ENCODE measurements at regions of chr6 and their contacts with region 1.

Region 1: DNA sequence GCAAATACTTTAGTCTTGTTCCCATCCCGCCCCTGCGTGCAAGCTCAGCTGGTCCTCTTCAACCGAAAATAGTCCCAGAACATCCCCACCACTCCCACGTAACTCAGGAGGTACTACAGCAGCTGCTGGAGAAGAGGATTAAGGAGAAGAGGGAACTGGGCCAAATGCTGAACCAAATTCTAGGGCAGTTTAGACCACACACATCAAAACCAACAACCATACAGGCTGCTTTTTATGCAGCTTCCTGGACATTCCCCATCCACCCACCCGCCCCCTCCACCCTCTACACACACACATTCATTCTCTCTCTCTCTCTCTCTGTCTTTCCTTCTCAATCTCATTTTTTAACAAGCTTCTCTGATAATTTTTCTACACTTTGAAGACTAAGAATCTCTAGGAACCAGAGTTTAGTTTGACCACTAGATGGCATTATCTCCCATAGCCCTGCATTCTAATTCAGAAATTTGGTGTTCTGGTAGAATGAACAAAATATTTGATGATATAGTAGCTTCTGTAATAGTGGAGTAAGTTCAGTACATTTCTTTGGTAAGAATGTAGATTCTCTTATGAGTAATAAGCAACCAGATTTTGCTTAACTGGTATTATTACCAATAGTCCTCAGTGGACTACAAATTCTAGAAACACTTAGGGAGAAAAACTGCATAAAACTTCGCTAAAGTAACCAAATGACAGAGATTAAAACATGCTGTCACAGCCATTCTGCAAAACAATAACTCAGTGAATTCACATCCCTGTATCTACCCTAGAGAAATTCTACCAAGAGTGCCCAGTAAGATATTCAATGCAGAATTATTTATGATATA is 52.1 kb upstream of the BEND6 start:
- DNase-seq: peak; percentile 46
- H3K4me3 Mint-ChIP-seq: no peak overlapping the region
- H3K27ac Mint-ChIP-seq: no peak overlapping the region
- H3K4me1 Mint-ChIP-seq: peaks cover 16% of the 10 kb centered on the region
- H3K27me3 Mint-ChIP-seq: no peaks in the 10 kb centered on the region
- CTCF ChIP-seq: peak; percentile 58

Region 2: GRCh38 chr6:56517155-56517745 is 385.6 kb before region 1 on chr6:
- CTCF ChIA-PET with region 1: no interaction called
- POLR2A ChIA-PET with region 1: no interaction called
- intact Hi-C with region 1: no loop called
- DNase-seq: no peak
- H3K4me3 Mint-ChIP-seq: no peak overlapping the region
- H3K27ac Mint-ChIP-seq: no peak overlapping the region
- H3K4me1 Mint-ChIP-seq: peaks cover 6% of the 10 kb centered on the region
- H3K27me3 Mint-ChIP-seq: no peaks in the 10 kb centered on the region
- CTCF ChIP-seq: no peak

Region 3: GRCh38 chr6:56862415-56863175 is 40.3 kb before region 1 on chr6:
- CTCF ChIA-PET with region 1: interaction called, 11 read pairs
- POLR2A ChIA-PET with region 1: no interaction called
- intact Hi-C with region 1: no loop called
- DNase-seq: no peak
- H3K4me3 Mint-ChIP-seq: peak overlapping the region; percentile 3
- H3K27ac Mint-ChIP-seq: peak overlapping the region; percentile 77
- H3K4me1 Mint-ChIP-seq: peaks cover 36% of the 10 kb centered on the region
- H3K27me3 Mint-ChIP-seq: no peaks in the 10 kb centered on the region
- CTCF ChIP-seq: no peak

Region 4: DNA sequence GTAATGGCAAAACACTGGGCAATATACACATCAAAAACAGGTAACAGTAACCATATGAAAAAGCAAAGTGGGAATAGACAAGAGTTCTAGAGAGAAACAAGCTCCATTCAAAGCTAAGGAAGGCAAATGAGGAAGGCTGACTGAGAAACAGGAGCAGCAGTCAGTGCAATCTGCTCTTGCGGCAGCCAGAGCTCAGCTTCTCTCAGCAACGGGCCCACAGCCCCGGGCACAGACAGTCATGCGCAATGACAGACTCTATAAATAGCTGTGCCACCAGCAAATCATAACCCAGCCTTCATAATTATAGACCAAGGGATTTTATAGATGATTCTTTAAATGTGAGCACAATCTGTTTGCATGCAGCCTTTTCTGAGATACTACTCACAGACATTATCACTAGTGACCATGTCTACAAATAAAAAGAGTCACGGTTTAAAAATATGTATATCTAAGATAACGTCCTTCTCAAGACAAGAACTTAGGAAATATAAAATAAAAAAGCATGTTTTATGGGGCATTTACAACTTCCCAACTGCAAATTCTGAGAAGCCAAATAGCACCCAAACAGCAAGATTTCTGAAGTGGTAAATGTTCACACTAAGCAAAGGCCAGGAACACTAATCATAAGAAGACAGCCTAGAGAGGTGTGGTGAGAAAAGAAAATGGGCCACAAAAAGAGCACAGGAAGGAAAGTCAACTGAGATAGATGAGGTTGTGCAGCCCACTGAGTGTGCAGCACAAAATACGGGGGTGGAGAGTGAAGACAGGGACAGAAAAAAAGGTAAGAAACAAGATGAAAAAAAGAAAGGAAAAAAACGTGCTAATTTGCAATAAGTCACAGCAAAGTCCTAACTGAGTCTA is 12.2 kb after region 1 on chr6:
- CTCF ChIA-PET with region 1: interaction called, 29 read pairs
- POLR2A ChIA-PET with region 1: no interaction called
- intact Hi-C with region 1: no loop called
- DNase-seq: no peak
- H3K4me3 Mint-ChIP-seq: no peak overlapping the region
- H3K27ac Mint-ChIP-seq: no peak overlapping the region
- H3K4me1 Mint-ChIP-seq: peaks cover 6% of the 10 kb centered on the region
- H3K27me3 Mint-ChIP-seq: no peaks in the 10 kb centered on the region
- CTCF ChIP-seq: no peak

Region 5: DNA sequence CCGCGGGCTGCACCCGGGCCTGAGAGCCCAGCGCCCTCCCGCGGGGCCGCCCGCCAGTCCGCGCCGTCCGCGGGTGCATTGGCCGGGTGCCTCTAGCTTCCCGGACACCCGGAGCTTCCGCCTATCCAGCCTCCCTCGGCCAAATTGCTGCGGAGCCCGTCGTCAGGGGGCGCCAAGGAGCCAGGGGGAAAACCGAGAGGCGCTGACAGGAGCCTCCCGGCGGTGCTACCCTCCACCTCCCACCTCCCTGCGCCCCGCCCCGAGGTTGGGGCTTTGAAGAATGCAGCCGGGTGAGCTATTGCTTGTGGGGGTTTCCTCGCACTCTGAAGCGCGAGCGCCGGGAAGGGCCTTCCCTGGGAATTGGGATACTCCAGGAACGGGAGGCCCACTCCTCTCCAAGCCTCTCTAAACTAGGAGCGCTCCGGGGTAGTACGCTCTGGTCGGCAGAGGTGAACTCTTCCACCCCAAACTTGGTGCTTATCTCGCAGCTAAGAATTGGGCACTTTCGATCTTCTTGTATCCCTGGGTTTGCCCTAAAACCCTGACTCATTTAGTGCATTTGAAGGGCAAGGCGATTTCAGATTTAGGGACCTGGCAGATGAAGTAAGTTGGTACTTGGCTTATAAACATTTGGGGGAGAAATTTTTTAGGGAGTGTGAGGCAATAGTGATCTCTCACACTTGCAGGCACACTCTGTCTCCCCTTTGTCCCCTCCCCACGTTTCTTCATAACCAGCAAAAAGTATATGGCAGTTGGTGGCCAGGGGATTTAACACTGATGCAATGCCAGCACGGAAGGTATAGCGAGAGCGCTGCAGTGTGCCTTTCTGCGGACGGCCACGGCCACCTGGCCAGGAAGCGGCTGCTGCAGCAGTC is 52.6 kb after region 1 on chr6:
- CTCF ChIA-PET with region 1: interaction called, 154 read pairs
- POLR2A ChIA-PET with region 1: interaction called, 17 read pairs
- intact Hi-C with region 1: loop called (anchors 1 kb)
- DNase-seq: peak; percentile 92
- H3K4me3 Mint-ChIP-seq: peak overlapping the region; percentile 97
- H3K27ac Mint-ChIP-seq: peak overlapping the region; percentile 29
- H3K4me1 Mint-ChIP-seq: peaks cover 13% of the 10 kb centered on the region
- H3K27me3 Mint-ChIP-seq: no peaks in the 10 kb centered on the region
- CTCF ChIP-seq: peak; percentile 77

Region 6: GRCh38 chr6:57021086-57021720 is 118.3 kb after region 1 on chr6:
- CTCF ChIA-PET with region 1: interaction called, 112 read pairs
- POLR2A ChIA-PET with region 1: interaction called, 10 read pairs
- intact Hi-C with region 1: loop called (anchors 1 kb)
- DNase-seq: peak; percentile 42
- H3K4me3 Mint-ChIP-seq: no peak overlapping the region
- H3K27ac Mint-ChIP-seq: no peak overlapping the region
- H3K4me1 Mint-ChIP-seq: no peaks in the 10 kb centered on the region
- H3K27me3 Mint-ChIP-seq: no peaks in the 10 kb centered on the region
- CTCF ChIP-seq: peak; percentile 38

Region 7: DNA sequence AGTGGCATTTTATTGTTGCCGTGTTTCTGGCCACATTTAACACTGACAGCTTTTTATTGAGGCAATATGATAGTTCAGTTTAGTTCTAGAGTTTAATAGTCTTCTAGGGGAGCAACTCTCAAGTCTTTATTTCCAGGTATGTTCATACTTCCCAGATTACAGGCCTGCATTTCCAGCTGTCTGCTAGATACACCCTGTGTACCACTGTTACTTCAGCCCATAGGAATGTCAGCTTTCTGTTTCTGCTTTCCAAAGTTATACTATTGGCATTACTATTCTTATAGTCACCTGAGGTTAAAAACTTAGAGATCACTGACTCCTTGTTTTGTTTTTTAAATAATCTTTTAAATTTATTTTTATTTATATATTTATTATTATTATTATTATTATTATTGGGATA is 194.7 kb after region 1 on chr6:
- CTCF ChIA-PET with region 1: interaction called, 14 read pairs
- POLR2A ChIA-PET with region 1: no interaction called
- intact Hi-C with region 1: no loop called
- DNase-seq: no peak
- H3K4me3 Mint-ChIP-seq: no peak overlapping the region
- H3K27ac Mint-ChIP-seq: no peak overlapping the region
- H3K4me1 Mint-ChIP-seq: peaks cover 21% of the 10 kb centered on the region
- H3K27me3 Mint-ChIP-seq: no peaks in the 10 kb centered on the region
- CTCF ChIP-seq: no peak

Region 8: DNA sequence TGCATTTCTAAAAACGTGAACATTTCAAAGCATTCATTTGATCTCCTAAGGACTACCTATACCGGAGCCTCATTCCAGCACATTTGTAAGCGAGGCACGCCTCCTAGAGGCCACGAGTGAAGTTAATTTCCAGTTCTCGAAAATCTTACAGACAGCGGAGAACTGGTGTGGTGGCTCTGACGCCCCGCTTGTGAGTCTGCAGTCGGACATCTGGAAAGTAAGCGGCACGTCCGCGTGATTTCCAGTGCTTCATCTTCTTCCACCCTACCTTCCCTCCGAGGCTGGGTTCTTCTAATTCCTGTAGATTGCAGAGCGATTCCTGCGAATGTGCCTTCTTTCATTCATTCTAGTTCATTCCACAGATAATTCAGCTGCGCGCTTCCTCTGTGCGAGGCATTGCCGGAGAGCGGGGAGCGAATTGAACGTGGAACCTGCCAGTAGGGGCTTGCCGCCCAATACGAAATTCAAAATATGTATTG is 413.8 kb after region 1 on chr6:
- CTCF ChIA-PET with region 1: interaction called, 82 read pairs
- POLR2A ChIA-PET with region 1: interaction called, 16 read pairs
- intact Hi-C with region 1: loop called (anchors 1 kb)
- DNase-seq: peak; percentile 94
- H3K4me3 Mint-ChIP-seq: peak overlapping the region; percentile 95
- H3K27ac Mint-ChIP-seq: peak overlapping the region; percentile 88
- H3K4me1 Mint-ChIP-seq: peaks cover 32% of the 10 kb centered on the region
- H3K27me3 Mint-ChIP-seq: no peaks in the 10 kb centered on the region
- CTCF ChIP-seq: peak; percentile 82